ENCODE measurements at regions of chr3 and their contacts with region 1.

Region 1: GRCh38 chr3:64728428-64728827 is 40.6 kb upstream of the ADAMTS9 start:
- DNase-seq: peak; percentile 76

Region 2: DNA sequence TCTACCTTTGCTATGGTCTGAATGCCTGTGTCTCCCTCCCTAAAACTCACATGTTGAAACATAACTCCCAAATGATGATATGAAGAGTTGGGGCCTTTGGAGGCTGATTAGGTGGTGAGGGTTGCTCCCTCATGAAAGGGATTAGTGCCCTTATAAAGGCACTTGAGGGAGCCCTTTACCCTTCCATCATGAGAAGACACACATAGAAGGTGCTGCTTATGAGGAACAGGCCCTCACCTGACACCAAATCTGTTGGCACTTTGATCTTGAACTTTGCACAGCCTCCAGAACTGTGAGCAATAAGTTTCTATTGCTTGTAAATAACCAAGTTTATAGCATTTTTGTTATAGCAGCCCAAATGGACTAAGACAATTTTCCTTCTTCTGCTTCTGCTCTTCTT is 35.6 kb after region 1 on chr3:
- intact Hi-C with region 1: no loop called
- DNase-seq: no peak

Region 3: GRCh38 chr3:64908292-64908691 is 179.9 kb after region 1 on chr3:
- intact Hi-C with region 1: loop called (anchors 2 kb)
- DNase-seq: no peak

Measured in cardiac septum (tissue), 1 donor.